Transverse colon (tissue), 4 donors: ENCODE measurements at regions of chr19 and their contacts with region 1.

Region 1: GRCh38 chr19:39792999-39793546 is 14.4 kb downstream of the LEUTX start:
- DNase-seq: peak; percentile 71
- H3K4me3 ChIP-seq: peak overlapping the region; percentile 27 to 49 (median 32)
- H3K27ac ChIP-seq: no peak overlapping the region
- H3K4me1 ChIP-seq: no peaks in the 10 kb centered on the region
- H3K27me3 ChIP-seq: peaks cover 13% of the 10 kb centered on the region
- CTCF ChIP-seq: peak; percentile 79 to 84 (median 83)
- EP300 ChIP-seq: no peak
- POLR2A ChIP-seq: no peak

Region 2: DNA sequence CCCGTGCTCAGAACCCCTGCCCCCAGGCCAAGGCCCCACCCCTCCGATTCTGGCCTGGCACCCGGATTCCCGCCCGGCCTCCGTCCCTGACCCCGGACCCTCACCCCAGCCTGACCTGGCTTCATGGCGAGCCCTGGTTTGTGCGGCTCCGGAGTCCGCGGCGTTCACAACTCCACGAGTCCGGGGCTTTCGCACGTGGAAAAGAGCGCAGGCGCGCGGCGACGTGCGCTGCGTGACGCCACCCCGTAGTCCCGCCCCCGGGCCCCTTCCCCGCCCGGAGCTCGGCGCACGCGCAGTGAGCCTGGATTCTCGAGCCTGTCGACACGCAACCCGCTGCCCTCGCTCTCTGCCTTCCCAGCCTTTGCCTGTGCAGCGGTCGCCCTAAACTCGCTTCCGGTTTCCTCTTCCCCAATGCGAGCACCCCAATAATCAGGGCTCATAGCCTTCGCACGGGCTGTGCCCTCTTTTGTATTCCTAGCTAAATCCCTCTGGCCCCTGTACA is 53.2 kb after region 1 on chr19 and contains the start of gene FBL:
- in situ Hi-C with region 1: loop called in 2 of 4 experiments (anchors 10 kb)
- intact Hi-C with region 1: no loop called
- DNase-seq: peak; percentile 98
- H3K4me3 ChIP-seq: peak within 1 kb of the TSS; percentile 71 to 87 (median 76)
- H3K27ac ChIP-seq: peak within 1 kb of the TSS; percentile 82 to 89 (median 86)
- H3K4me1 ChIP-seq: peaks cover 15 to 48% (median 28%) of the 10 kb centered on the region in 4 donors
- H3K27me3 ChIP-seq: no peaks in the 10 kb centered on the region
- CTCF ChIP-seq: no peak
- EP300 ChIP-seq: no peak
- POLR2A ChIP-seq: peak; percentile 55
- total RNA-seq, gene FBL: 20.6 to 107 (median 62.6) TPM

Region 3: GRCh38 chr19:39969681-39970424 is 176.8 kb after region 1 on chr19:
- in situ Hi-C with region 1: no loop called
- intact Hi-C with region 1: loop called (anchors 10 kb)
- DNase-seq: no peak
- H3K4me3 ChIP-seq: peak overlapping the region; percentile 60 to 81 (median 77)
- H3K27ac ChIP-seq: peak overlapping the region; percentile 92 to 96 (median 94)
- H3K4me1 ChIP-seq: peaks cover 15 to 27% (median 21%) of the 10 kb centered on the region in 4 donors
- H3K27me3 ChIP-seq: no peaks in the 10 kb centered on the region
- CTCF ChIP-seq: no peak
- EP300 ChIP-seq: no peak
- POLR2A ChIP-seq: no peak